GM23248 (cell line): ENCODE measurements at regions of chr9 and their contacts with region 1.

Region 1: DNA sequence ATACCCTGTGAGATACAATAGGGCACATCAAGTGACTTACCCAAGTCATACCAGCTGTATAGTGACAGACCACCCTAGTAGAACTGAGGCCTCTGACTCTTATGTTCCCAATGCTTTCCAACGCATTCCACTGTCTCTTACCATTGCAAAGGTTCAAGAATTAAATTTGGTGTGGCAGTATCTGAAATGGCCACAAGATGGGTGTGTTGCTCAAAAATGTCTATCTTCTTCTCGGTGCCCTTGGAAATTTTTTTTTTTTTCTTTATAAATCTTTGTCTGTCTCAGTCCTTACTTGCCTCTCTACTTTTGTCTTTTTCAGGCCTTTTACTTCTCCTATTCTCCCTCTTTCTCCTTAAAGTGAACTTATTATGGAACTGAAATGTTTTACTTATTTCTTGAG is 48.4 kb downstream of the GPR21 start:
- DNase-seq: peak; percentile 63
- H3K4me3 ChIP-seq: no peak overlapping the region
- H3K27ac ChIP-seq: no peak overlapping the region
- H3K4me1 ChIP-seq: no peaks in the 10 kb centered on the region
- H3K27me3 ChIP-seq: no peaks in the 10 kb centered on the region

Region 2: GRCh38 chr9:122821278-122821943 is 260.4 kb before region 1 on chr9:
- in situ Hi-C with region 1: no loop called
- DNase-seq: no peak
- H3K4me3 ChIP-seq: no peak overlapping the region
- H3K27ac ChIP-seq: no peak overlapping the region
- H3K4me1 ChIP-seq: peaks cover 7% of the 10 kb centered on the region; the same call in 1 of the 2 replicates
- H3K27me3 ChIP-seq: no peaks in the 10 kb centered on the region

Region 3: DNA sequence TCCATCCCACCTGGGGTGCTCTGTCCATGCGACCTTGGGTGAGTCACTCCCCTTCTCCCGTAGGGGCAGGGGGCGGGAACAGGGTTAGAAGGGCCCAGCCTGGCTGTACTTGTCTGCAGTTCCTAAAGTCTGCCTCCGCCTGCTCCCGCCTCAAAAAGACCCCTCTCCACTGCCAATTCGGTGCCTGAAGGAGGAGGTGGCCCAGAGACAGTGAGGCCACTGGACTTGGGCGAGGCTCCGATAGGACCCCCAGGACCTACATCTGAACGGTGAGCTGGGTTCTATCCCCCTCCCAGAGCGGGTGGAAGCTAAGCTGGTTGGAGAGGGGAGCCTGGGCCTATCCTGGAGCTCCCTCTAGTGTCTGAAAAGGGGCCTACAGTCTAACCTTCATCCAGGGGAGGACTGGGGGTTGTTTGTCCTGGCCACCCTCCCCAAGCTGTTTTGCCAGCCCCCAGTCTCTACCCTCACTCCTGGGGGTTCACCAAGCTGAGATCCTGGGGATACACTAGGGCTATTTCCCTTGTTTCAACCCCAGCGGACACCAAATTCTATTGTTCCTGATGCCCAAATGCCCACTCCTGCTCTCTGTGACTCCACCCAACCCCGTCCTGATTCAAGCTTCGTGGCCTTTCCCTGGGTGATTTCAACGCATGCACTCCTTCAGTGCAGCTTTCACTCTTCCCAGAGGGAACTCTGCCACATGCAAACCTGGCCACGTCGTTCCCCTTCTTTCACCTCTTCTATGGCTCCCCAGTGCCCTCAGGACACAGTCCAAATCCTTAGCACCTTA is 268.1 kb after region 1 on chr9:
- in situ Hi-C with region 1: loop called (anchors 5 kb)
- DNase-seq: peak; percentile 67
- H3K4me3 ChIP-seq: no peak overlapping the region
- H3K27ac ChIP-seq: no peak overlapping the region
- H3K4me1 ChIP-seq: no peaks in the 10 kb centered on the region
- H3K27me3 ChIP-seq: peaks cover 14% of the 10 kb centered on the region